MCF 10A (cell line): ENCODE measurements at regions of chr2 and their contacts with region 1.

Region 1: GRCh38 chr2:69914170-69914960 is 544 bp upstream of the MXD1 start:
- DNase-seq: peak; percentile 100
- H3K4me3 Mint-ChIP-seq: peak overlapping the region; percentile 78
- H3K27ac Mint-ChIP-seq: peak overlapping the region; percentile 46
- H3K4me1 Mint-ChIP-seq: peaks cover 24% of the 10 kb centered on the region
- H3K27me3 Mint-ChIP-seq: no peaks in the 10 kb centered on the region
- CTCF ChIP-seq: no peak

Region 2: GRCh38 chr2:69667805-69668382 is 246.5 kb before region 1 on chr2:
- CTCF ChIA-PET with region 1: no interaction called
- POLR2A ChIA-PET with region 1: no interaction called
- intact Hi-C with region 1: no loop called
- DNase-seq: peak; percentile 5
- H3K4me3 Mint-ChIP-seq: no peak overlapping the region
- H3K27ac Mint-ChIP-seq: peak overlapping the region; percentile 24
- H3K4me1 Mint-ChIP-seq: peaks cover 10% of the 10 kb centered on the region
- H3K27me3 Mint-ChIP-seq: no peaks in the 10 kb centered on the region
- CTCF ChIP-seq: no peak

Region 3: DNA sequence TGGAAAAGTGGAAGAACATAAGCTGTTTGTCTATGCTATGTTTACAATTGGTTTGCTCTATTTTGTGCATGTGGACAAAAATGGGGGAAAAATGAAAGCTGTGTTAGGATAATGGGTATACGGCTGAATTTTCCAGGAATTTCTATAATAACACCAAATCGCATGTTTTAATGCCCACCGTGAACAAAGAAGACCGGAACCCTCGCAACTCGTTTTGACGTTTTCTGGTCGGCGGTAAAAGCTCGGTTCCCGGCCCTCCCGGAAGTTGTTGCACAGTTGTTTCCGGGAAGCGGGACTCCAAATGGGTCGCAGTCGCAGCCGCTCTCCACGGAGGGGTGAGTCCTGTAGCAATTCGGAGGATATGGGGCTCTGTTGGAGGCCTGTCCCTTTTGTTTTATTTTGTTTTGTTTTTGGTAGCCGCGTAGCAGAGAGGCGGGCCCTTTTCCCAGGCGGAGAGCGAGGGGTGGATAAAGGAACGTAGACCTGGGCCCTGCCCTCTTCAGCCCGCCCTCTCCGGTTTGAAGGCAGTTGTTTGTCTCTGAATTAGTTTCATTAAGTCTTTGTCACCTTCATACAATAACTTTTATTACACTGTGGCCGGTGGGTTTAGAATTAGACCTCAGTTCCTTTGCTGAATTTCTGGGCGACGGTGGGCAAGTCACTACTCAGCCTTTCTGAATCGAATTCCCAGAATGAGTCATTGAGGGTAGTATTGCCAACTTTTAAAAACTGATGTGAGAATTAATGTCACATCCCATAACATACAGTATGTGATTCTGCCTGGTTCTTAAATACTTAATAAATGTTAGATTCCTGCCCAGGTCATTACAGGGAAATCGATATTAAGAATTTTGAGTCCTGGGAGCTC is 20.4 kb before region 1 on chr2 and contains the start of gene SNRNP27:
- CTCF ChIA-PET with region 1: interaction called, 4 read pairs
- POLR2A ChIA-PET with region 1: interaction called, 69 read pairs
- intact Hi-C with region 1: no loop called
- DNase-seq: peak; percentile 82
- H3K4me3 Mint-ChIP-seq: peak within 1 kb of the TSS; percentile 99
- H3K27ac Mint-ChIP-seq: peak within 1 kb of the TSS; percentile 100
- H3K4me1 Mint-ChIP-seq: peaks cover 18% of the 10 kb centered on the region
- H3K27me3 Mint-ChIP-seq: no peaks in the 10 kb centered on the region
- CTCF ChIP-seq: no peak
- total RNA-seq, gene SNRNP27: 68.9 and 81.0 TPM in 2 replicates

Region 4: DNA sequence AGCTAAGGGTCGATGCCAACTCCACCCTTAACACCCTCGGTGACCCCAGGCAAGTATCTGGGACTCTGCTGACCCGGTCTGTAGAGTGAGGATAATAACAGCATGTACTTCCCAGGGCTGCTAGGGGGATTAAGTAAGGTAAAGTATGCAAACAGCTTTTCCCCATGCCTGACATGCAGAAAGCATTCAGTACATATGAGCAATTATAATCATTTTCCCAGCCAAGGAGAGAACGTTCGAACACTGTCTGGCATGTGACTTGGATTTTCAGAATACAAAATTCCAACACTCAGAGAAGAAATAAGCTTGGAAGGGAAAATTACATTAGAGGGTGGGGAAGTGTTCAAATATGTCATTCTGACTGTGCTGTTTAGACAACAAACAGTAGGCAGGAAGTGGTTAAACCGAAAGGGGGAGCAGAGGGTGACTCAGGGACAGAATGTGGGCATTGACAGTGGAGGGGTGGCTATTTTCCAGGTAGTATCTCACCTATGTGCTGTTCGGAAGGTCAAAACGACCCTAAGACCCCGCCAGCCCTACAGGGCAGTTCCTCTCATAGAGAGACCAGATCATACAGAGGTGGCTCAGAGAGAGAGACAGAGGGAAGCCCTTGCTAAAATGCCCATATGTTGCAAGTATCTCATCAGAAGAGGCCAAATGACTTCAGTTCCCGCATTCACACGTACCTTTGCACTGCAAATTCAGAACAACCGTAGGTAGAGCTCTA is 32.1 kb after region 1 on chr2:
- CTCF ChIA-PET with region 1: no interaction called
- POLR2A ChIA-PET with region 1: interaction called, 29 read pairs
- intact Hi-C with region 1: no loop called
- DNase-seq: peak; percentile 76
- H3K4me3 Mint-ChIP-seq: peak overlapping the region; percentile 11
- H3K27ac Mint-ChIP-seq: peak overlapping the region; percentile 69
- H3K4me1 Mint-ChIP-seq: peaks cover 39% of the 10 kb centered on the region
- H3K27me3 Mint-ChIP-seq: no peaks in the 10 kb centered on the region
- CTCF ChIP-seq: no peak

Region 5: GRCh38 chr2:70070541-70071268 is 156.3 kb after region 1 on chr2:
- CTCF ChIA-PET with region 1: interaction called, 106 read pairs
- POLR2A ChIA-PET with region 1: interaction called, 191 read pairs
- intact Hi-C with region 1: loop called (anchors 1 kb)
- DNase-seq: peak; percentile 85
- H3K4me3 Mint-ChIP-seq: no peak overlapping the region
- H3K27ac Mint-ChIP-seq: peak overlapping the region; percentile 7
- H3K4me1 Mint-ChIP-seq: peaks cover 8% of the 10 kb centered on the region
- H3K27me3 Mint-ChIP-seq: no peaks in the 10 kb centered on the region
- CTCF ChIP-seq: peak; percentile 50

Region 6: DNA sequence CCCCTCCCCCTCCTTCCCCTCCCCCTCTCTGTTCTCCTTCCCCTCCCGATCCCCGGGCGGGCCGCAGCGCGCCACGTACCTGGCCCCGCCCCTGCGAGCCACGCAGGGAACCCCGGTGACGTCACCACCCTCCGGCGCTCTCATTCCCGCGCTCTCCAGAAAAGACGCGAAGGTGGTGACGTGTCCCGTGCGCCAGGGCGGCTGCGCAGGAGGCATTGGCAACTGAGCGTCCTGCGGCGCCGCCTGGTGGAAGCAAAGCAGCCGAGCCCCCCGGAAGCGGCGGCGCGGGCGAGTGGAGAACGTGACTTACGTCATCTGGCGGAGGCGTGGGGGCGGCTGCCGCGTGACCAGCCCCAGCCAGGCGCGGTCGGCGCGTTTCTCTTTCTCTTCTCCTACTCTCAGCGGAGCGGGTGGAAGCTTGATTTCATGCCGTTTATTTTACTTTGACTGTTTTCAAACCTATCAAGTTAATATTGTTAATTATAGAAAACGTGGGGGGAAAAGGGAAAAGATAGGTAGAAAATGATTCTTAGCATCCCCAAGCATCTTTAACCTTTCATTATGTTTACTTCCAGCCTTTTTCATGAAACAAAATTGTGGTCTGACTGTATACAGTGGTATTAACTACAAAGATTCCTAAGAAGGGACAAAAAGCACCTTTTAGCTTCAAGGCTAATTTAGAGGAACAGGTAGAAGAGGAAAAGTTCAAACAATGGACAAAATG is 228.4 kb after region 1 on chr2:
- CTCF ChIA-PET with region 1: interaction called, 17 read pairs
- POLR2A ChIA-PET with region 1: interaction called, 185 read pairs
- intact Hi-C with region 1: loop called (anchors 1 kb)
- DNase-seq: peak; percentile 99
- H3K4me3 Mint-ChIP-seq: peak overlapping the region; percentile 76
- H3K27ac Mint-ChIP-seq: peak overlapping the region; percentile 89
- H3K4me1 Mint-ChIP-seq: peaks cover 24% of the 10 kb centered on the region
- H3K27me3 Mint-ChIP-seq: no peaks in the 10 kb centered on the region
- CTCF ChIP-seq: peak; percentile 90

Region 7: DNA sequence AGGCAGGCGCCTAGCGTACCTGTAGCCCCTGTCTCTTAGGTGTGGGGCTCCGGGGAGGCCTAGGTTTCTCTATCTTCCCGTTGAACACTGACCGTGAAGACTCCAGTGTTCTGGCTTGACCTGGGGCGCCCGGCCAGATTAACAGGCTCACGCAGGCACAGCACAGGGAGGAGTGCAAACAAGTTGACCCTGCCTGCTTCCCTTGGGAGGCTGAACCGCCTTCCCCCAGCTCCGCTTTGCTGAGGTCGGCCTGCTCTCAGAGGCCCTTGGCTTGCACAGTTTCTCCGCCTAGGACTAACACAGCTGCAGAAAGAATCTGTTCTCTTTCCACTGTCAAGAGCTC is 344.1 kb after region 1 on chr2:
- CTCF ChIA-PET with region 1: no interaction called
- POLR2A ChIA-PET with region 1: interaction called, 21 read pairs
- intact Hi-C with region 1: no loop called
- DNase-seq: no peak
- H3K4me3 Mint-ChIP-seq: peak overlapping the region; percentile 87
- H3K27ac Mint-ChIP-seq: peak overlapping the region; percentile 61
- H3K4me1 Mint-ChIP-seq: peaks cover 20% of the 10 kb centered on the region
- H3K27me3 Mint-ChIP-seq: no peaks in the 10 kb centered on the region
- CTCF ChIP-seq: no peak